Heart right ventricle (tissue), 16 donors: ENCODE measurements at regions of chr19 and their contacts with region 1.

Region 1: GRCh38 chr19:12716861-12717260 is 6.9 kb downstream of the TNPO2 start:
- DNase-seq: no peak
- ATAC-seq: no peak
- H3K4me3 ChIP-seq: no peak overlapping the region
- H3K27ac ChIP-seq: no peak overlapping the region
- H3K4me1 ChIP-seq: peaks cover 7 to 32% (median 18%) of the 10 kb centered on the region in 9 donors
- H3K27me3 ChIP-seq: no peaks in the 10 kb centered on the region
- CTCF ChIP-seq: peak in 7 of 9 donors; percentile 16 to 42 (median 23)

Region 2: DNA sequence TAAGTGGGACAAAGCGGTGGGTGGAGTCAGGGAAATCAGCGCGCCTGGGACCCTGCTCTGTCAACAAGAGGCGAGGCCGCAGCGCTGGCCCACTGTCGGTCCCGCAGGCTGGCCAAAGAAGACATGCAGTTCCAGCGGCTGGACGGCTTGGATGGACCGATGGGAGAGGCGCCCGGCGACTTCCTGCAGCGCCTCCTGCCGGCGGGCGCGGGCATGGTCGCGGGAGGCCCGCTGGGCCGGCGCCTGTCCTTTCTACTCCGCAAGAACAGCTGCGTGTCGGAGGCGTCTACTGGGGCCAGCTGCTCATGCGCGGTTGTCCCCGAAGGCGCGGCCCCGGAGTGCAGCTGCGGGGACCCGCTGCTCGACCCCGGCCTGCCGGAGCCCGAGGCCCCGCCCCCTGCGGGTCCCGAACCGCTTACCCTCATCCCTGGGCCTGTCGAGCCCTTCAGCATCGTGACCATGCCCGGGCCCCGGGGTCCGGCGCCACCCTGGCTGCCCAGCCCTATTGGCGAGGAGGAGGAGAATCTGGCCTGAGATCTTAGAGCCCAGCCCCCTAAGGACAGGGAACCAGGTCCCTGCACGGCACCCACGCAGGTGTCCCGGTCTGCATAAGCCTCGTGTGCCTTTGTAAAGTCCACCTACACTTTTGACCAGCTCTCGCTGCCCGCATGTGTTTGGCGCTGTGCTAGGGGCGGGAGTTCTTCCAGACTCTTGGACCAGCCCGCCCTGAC is 40.8 kb after region 1 on chr19:
- intact Hi-C with region 1: loop called in 1 of 10 experiments (anchors 5 kb)
- DNase-seq: peak; percentile 60 to 73
- ATAC-seq: peak; percentile 73 to 86 (median 76)
- H3K4me3 ChIP-seq: peak overlapping the region in 9 of 10 donors; percentile 21 to 50 (median 42)
- H3K27ac ChIP-seq: peak overlapping the region; percentile 28 to 64 (median 52)
- H3K4me1 ChIP-seq: peaks cover 0 to 31% (median 12%) of the 10 kb centered on the region in 9 donors
- H3K27me3 ChIP-seq: peaks cover 0 to 13% (median 4%) of the 10 kb centered on the region in 7 donors
- CTCF ChIP-seq: peak; percentile 77 to 97 (median 92)